ENCODE measurements at regions of chr7 and their contacts with region 1.

Region 1: DNA sequence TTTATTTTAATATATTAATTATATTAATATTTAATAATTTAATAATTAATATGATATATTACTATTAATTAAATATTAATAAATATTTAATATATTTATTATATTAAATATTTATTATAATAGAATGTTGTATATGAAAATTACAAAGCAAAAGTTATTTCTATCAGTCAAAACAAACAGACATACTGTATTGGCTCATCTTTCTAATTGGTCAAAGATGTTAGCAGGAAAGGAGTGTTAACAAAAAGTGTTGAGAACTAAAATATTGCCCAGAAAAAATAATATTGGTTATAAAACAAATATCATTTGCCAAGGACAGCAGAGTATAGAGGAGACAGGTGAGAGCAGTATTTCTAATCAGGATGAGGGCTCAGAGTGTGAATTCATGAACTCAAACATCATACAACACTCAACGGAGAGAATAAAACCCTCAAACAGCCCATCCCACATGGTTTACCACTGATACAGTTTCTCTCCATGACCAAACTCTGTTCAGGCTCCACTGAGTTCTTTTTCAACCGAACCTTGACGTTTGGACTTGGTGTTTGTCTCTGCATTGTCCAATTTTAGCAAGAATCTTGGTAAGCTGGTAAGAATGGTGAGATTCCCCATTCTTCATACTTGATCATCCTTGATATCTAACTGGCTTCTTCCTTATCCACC is 58.0 kb downstream of the TSPAN12 start:
- DNase-seq: no peak
- H3K4me3 ChIP-seq: no peak overlapping the region
- H3K27ac ChIP-seq: no peak overlapping the region
- H3K4me1 ChIP-seq: no peaks in the 10 kb centered on the region
- H3K27me3 ChIP-seq: no peaks in the 10 kb centered on the region
- CTCF ChIP-seq: no peak
- EP300 ChIP-seq: no peak
- POLR2A ChIP-seq: no peak

Region 2: GRCh38 chr7:120941064-120941463 is 141.1 kb after region 1 on chr7:
- intact Hi-C with region 1: loop called (anchors 5 kb)
- DNase-seq: no peak
- H3K4me3 ChIP-seq: no peak overlapping the region
- H3K27ac ChIP-seq: no peak overlapping the region
- H3K4me1 ChIP-seq: no peaks in the 10 kb centered on the region
- H3K27me3 ChIP-seq: no peaks in the 10 kb centered on the region
- CTCF ChIP-seq: peak; percentile 20 to 30 (median 21)
- EP300 ChIP-seq: no peak
- POLR2A ChIP-seq: no peak

Measured in esophagus muscularis mucosa (tissue), 4 donors.